ENCODE measurements at regions of chr12 and their contacts with region 1.

Region 1: GRCh38 chr12:3820122-3820521 is 53.1 kb downstream of the PARP11 start:
- DNase-seq: no peak
- H3K4me3 ChIP-seq: no peak overlapping the region
- H3K27me3 ChIP-seq: no peaks in the 10 kb centered on the region
- CTCF ChIP-seq: no peak

Region 2: DNA sequence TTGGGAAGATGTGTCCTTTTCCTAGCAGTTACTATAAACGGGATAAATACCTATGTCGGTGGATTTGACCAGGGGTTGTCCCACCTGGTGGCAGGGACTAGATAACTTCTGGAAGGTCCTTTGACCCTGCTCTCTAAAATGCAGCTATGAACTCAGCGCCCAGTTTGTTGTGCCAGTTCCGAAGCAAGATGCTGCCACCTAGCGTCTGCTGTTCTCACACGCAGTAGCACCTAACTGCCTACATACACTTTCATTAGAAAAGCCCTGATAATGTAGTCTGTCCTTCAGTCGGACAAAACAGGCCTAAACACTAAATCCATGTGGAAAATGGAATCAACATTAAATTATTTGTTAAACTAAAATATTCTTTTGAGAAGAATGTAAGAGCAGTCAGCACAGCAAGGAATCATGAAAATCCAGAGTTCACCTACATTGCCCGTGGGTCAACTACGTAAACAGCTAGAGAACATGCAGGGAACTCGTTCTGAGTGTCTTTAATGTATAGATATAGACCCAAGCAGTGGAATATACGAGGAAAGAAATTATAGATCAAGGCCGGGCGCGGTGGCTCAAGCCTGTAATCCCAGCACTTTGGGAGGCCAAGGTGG is 16.2 kb before region 1 on chr12:
- CTCF ChIA-PET with region 1: interaction called, 10 read pairs
- POLR2A ChIA-PET with region 1: no interaction called
- DNase-seq: no peak
- H3K4me3 ChIP-seq: no peak overlapping the region
- H3K27me3 ChIP-seq: no peaks in the 10 kb centered on the region
- CTCF ChIP-seq: peak; percentile 87